GM10248 (cell line): ENCODE measurements at regions of chr18 and their contacts with region 1.

Region 1: DNA sequence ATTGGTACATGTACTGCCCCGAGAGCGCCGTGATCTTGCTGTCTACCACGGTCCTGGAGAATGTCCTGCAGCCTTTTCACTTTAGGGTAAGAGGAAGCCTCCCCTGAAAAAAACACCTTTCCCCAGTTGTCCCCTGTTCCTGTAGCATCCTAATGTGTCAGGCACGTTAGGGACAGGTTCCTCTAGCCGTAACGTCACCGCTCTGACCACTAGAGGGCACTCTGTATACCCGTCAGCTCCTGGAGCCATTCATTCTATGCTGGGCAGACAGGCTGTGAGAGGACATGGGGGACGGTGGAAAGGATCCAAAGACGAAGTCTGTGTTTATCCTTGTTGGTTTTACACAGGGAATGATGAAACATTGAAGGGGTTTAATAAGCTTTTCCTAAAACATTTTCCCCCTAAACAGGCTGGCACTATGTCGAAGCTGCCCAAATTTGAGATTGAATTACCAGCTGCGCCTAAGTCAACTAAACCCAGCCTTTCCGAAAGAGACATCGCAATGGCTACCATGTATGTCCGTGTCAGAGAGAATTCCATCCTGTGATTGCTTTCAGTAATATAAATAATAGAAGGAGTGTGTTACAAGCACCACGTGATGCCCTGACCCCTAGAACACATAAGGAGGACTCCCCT is 12.7 kb downstream of the RMC1 start:
- DNase-seq: peak; percentile 75
- CTCF ChIP-seq: peak; percentile 93

Region 2: DNA sequence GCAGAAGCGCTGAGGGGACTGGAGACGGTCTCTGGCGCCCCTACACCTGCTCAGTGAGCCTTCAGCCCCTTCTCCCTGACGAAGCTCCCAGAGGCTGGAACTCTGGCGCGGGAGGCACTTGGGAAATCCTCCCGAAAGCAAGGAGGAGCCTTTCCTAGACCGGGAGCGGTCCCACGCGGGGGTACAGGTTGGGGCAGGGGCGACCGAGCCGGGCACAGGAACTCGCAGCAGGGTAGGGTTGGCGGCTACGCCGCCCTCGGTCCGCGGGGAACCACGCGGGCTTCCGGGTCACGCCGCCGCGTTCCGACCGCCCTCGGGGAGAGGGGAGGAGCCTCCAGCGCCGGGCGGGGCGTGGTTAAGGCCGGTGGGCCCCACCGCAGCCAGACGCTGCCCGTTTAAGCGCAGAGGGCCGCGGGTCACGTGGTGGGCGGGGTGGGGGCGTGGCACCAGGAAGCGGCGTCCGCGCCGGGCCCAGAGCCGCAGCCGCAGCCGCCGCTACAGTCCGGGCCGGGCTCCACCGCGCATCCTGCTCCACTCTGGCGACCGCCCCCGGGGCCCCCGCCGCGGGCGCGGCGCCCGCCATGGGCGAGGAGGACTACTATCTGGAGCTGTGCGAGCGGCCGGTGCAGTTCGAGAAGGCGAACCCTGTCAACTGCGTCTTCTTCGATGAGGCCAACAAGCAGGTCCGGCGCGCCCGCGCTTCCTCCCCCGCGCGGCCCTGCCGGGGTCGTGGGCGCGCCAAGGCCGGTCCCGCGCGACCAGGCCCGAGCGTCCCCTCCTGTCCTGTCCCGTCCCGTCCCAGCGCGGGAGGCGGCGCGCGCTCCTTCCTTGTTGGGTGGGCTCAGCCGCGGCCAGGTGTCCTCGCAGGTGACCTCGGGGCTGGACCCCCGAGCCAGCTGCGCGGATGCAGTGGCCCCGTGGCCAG is 12.7 kb before region 1 on chr18 and contains the start of gene RMC1:
- CTCF ChIA-PET with region 1: interaction called, 46 read pairs
- POLR2A ChIA-PET with region 1: no interaction called
- DNase-seq: peak; percentile 96
- CTCF ChIP-seq: peak; percentile 25

Region 3: GRCh38 chr18:23529597-23529996 is 13.6 kb after region 1 on chr18:
- CTCF ChIA-PET with region 1: interaction called, 36 read pairs
- POLR2A ChIA-PET with region 1: no interaction called
- DNase-seq: peak; percentile 35
- CTCF ChIP-seq: no peak

Region 4: GRCh38 chr18:23536231-23536630 is 20.2 kb after region 1 on chr18:
- CTCF ChIA-PET with region 1: interaction called, 13 read pairs
- POLR2A ChIA-PET with region 1: no interaction called
- DNase-seq: no peak
- CTCF ChIP-seq: no peak

Region 5: GRCh38 chr18:23553887-23554286 is 37.9 kb after region 1 on chr18:
- CTCF ChIA-PET with region 1: interaction called, 10 read pairs
- POLR2A ChIA-PET with region 1: interaction called, 3 read pairs
- DNase-seq: no peak
- CTCF ChIP-seq: no peak

Region 6: GRCh38 chr18:23570912-23571504 is 55.0 kb after region 1 on chr18:
- CTCF ChIA-PET with region 1: interaction called, 10 read pairs
- POLR2A ChIA-PET with region 1: no interaction called
- DNase-seq: no peak
- CTCF ChIP-seq: no peak

Region 7: GRCh38 chr18:23586249-23587196 is 70.5 kb after region 1 on chr18 and contains the start of gene NPC1:
- CTCF ChIA-PET with region 1: interaction called, 17 read pairs
- POLR2A ChIA-PET with region 1: no interaction called
- DNase-seq: peak; percentile 94
- CTCF ChIP-seq: peak; percentile 93